ENCODE measurements at regions of chr1 and their contacts with region 1.

Region 1: DNA sequence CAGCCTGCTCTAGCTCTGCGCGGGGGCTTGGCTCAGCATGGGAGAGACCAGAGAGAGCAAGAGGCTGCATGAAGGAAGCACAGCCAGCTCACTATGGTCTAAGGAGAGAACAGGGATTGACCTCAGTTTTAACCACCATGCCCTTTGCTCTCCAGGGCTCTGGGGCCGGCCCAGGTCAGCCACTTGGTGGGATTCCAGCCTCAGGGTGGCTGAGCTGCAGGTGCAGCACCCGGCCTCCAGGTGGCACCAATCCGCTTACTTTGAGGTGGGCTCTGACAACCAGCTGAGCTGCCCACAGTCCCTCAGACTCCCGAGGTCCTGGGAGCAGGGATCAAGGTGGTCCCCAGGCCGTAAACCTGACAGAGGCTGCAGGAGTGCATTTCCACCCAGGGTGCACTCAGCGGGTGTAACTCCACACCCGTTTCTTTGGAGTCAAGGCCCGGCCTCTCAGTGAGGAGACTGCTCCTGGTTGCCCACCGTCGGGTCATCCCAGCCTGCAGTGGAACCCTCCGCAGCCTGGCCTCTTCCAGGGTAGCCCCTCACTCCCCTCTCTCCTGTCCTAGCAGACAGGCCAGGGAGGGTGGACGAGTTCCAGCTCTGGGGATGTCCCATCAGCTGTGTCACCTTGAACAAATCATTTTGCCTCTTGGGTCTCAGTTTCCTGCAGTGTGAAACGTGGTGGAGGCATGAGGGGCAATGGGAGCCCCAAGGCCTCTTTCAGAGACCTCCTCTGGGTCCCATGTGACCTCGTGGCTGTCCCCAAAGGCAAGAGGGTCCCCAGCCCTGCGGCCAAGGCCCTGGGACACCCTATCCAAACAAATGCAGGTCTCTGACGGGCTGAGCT is 607 bp upstream of the LGR6 start:
- DNase-seq: peak in 1 of 2 donors; percentile 89
- H3K4me3 ChIP-seq: peak overlapping the region; percentile 37 to 73
- H3K27ac ChIP-seq: peak overlapping the region; percentile 82 to 89
- H3K4me1 ChIP-seq: peaks cover 3 to 14% of the 10 kb centered on the region in 2 donors
- H3K27me3 ChIP-seq: no peaks in the 10 kb centered on the region
- CTCF ChIP-seq: peak; percentile 83 to 97 (median 95)

Region 2: GRCh38 chr1:202164271-202165037 is 28.5 kb before region 1 on chr1:
- intact Hi-C with region 1: no loop called
- DNase-seq: no peak
- H3K4me3 ChIP-seq: no peak overlapping the region
- H3K27ac ChIP-seq: no peak overlapping the region
- H3K4me1 ChIP-seq: no peaks in the 10 kb centered on the region
- H3K27me3 ChIP-seq: no peaks in the 10 kb centered on the region
- CTCF ChIP-seq: no peak

Region 3: DNA sequence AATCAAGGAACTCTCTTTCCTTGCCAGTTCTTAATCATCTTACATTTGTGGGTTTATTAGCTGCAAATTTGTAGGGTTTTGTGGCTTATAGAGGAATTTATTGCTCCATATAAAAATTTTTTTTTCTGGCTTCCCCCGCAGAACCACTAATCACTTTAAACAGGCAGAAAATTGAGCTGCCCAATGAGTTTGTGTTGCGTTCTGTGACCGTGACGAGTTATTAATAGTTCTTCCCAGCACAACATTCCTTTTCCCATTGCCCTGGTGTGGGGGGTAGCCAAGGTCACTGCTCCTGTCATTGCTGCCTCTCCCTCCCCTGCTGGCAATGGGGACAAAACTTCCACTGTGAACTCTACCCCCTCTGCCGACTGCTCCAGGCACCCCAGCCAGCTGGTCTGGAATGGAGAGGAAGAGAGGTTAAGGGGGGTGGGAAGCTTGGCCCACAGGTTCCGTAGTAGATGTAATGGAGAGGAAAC is 93.7 kb after region 1 on chr1:
- intact Hi-C with region 1: loop called (anchors 2 kb)
- DNase-seq: peak in 1 of 2 donors; percentile 91
- H3K4me3 ChIP-seq: no peak overlapping the region
- H3K27ac ChIP-seq: peak overlapping the region; percentile 78 to 79
- H3K4me1 ChIP-seq: peaks cover 10 to 28% of the 10 kb centered on the region in 2 donors
- H3K27me3 ChIP-seq: no peaks in the 10 kb centered on the region
- CTCF ChIP-seq: peak; percentile 33 to 45 (median 38)

Region 4: DNA sequence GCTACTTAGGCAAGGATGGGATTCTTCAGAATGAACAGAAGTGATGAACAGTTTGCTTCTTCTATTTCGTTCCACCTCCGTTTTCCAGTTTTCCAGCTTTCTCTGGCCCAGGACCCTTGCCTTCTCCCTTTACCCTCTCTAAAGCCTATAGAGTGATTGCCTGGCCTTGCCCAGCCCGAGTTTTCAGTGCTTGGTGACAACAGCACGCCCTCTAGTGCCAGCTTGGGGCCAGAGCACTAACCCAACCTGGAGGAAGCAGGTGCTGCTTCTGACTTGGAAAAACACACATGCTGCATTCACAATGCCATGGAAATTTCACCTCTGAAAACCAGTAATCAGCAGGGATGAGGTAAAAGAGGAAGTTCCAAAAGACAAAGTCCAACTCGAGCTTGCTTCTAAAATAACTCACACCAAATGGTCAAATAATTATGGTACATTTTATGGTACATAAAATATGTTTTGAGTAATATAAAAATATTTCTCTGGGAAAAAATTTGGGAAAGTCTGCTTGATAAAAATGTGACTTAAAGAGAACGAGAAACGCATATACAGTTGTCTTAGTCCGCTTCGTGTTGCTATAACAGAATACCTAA is 122.7 kb after region 1 on chr1:
- intact Hi-C with region 1: loop called (anchors 1 kb)
- DNase-seq: peak in 1 of 2 donors; percentile 83
- H3K4me3 ChIP-seq: no peak overlapping the region
- H3K27ac ChIP-seq: no peak overlapping the region
- H3K4me1 ChIP-seq: peaks cover 0 to 9% of the 10 kb centered on the region in 2 donors
- H3K27me3 ChIP-seq: no peaks in the 10 kb centered on the region
- CTCF ChIP-seq: peak; percentile 73 to 89 (median 88)

Measured in ascending aorta (tissue), 2 donors.